ENCODE measurements at regions of chr5 and their contacts with region 1.

Region 1: GRCh38 chr5:141223112-141223783 is at the start of gene PCDHB14:
- DNase-seq: peak; percentile 79
- H3K4me3 Mint-ChIP-seq: peak within 1 kb of the TSS; percentile 84
- H3K27ac Mint-ChIP-seq: peak within 1 kb of the TSS; percentile 60
- H3K4me1 Mint-ChIP-seq: no peaks in the 10 kb centered on the region
- H3K27me3 Mint-ChIP-seq: no peaks in the 10 kb centered on the region
- CTCF ChIP-seq: peak; percentile 69
- total RNA-seq, gene PCDHB14: 4.7 and 6.2 TPM in 2 replicates

Region 2: GRCh38 chr5:139287890-139288635 is 1935.2 kb before region 1 on chr5:
- CTCF ChIA-PET with region 1: no interaction called
- POLR2A ChIA-PET with region 1: no interaction called
- intact Hi-C with region 1: no loop called
- DNase-seq: peak; percentile 47
- H3K4me3 Mint-ChIP-seq: no peak overlapping the region
- H3K27ac Mint-ChIP-seq: no peak overlapping the region
- H3K4me1 Mint-ChIP-seq: peaks cover 26% of the 10 kb centered on the region
- H3K27me3 Mint-ChIP-seq: no peaks in the 10 kb centered on the region
- CTCF ChIP-seq: peak; percentile 12

Region 3: DNA sequence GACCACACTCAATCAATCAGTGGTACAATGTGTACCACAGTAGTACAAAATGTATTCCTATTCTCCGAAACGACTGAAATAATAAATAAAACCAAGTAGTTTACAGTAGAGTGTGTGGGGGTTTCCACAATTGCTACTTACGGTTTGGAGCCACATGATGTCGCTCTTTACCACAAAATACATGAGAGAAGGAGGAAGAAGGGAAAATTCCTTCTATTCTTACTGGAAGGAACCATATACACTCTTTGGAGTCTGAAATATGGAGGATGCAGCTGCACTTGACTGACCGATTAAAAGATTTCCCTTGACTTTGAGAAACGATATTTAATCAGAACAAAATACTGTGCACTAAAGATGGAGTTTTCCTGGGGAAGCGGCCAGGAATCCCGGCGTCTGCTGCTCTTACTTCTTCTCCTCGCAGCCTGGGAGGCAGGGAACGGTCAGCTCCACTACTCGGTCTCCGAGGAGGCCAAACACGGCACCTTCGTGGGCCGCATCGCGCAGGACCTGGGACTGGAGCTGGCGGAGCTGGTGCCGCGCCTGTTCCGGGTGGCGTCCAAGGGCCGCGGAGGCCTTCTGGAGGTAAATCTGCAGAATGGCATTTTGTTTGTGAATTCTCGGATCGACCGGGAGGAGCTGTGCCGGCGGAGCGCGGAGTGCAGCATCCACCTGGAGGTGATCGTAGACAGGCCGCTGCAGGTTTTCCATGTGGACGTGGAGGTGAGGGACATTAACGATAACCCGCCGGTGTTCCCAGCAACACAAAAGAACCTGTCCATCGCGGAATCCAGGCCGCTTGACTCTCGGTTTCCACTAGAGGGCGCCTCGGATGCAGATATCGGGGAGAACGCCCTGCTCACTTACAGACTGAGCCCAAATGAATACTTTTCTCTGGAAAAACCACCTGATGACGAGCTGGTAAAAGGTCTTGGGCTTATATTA is 416.1 kb before region 1 on chr5 and contains the start of gene PCDHA4:
- CTCF ChIA-PET with region 1: interaction called, 17 read pairs
- POLR2A ChIA-PET with region 1: no interaction called
- intact Hi-C with region 1: no loop called
- DNase-seq: peak; percentile 18
- H3K4me3 Mint-ChIP-seq: peak within 1 kb of the TSS; percentile 55
- H3K27ac Mint-ChIP-seq: no peak within 1 kb of the TSS
- H3K4me1 Mint-ChIP-seq: no peaks in the 10 kb centered on the region
- H3K27me3 Mint-ChIP-seq: no peaks in the 10 kb centered on the region
- CTCF ChIP-seq: peak; percentile 38
- total RNA-seq, gene PCDHA4: 0.16 and 0.49 TPM in 2 replicates

Region 4: DNA sequence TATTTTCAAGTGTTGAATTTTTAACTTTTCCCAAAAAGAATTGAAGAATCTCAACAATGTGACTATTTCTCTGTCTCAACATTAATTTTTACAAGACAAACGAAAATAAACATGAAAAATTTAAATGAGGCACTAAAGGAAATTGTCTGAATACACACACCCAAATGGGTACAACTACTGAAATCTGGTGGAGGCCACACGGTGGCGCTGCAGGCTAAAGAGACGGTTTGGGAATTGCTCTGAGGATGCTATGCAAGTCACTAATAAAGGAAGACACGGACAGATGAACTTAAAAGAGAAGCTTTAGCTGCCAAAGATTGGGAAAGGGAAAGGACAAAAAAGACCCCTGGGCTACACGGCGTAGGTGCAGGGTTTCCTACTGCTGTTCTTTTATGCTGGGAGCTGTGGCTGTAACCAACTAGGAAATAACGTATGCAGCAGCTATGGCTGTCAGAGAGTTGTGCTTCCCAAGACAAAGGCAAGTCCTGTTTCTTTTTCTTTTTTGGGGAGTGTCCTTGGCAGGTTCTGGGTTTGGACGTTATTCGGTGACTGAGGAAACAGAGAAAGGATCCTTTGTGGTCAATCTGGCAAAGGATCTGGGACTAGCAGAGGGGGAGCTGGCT is 31.0 kb before region 1 on chr5 and contains the start of gene PCDHB10:
- CTCF ChIA-PET with region 1: interaction called, 12 read pairs
- POLR2A ChIA-PET with region 1: interaction called, 7 read pairs
- intact Hi-C with region 1: no loop called
- DNase-seq: peak; percentile 60
- H3K4me3 Mint-ChIP-seq: peak within 1 kb of the TSS; percentile 81
- H3K27ac Mint-ChIP-seq: no peak within 1 kb of the TSS
- H3K4me1 Mint-ChIP-seq: peaks cover 6% of the 10 kb centered on the region
- H3K27me3 Mint-ChIP-seq: no peaks in the 10 kb centered on the region
- CTCF ChIP-seq: peak; percentile 76
- total RNA-seq, gene PCDHB10: 1.2 and 1.4 TPM in 2 replicates

Region 5: DNA sequence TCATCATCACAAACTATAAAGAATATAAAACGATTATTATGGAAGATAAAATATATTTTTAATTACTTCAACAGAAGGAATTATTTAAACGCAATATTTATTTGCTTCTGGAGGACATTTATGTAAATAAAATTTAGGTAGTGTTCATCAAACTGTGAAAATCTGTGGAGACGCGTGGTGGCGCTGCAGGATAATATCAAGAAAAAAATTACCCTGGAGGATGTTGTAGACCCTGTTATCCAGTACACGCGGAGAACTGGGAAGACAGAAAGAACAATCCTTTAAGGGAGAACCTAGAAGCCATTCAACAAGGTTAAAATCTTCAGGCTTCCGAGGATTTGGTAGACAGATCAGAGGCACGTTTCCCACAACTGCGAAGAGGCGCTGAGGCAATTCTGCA is 14.8 kb before region 1 on chr5 and contains the start of gene PCDHB12:
- CTCF ChIA-PET with region 1: interaction called, 14 read pairs
- POLR2A ChIA-PET with region 1: interaction called, 7 read pairs
- intact Hi-C with region 1: no loop called
- DNase-seq: peak; percentile 60
- H3K4me3 Mint-ChIP-seq: peak within 1 kb of the TSS; percentile 72
- H3K27ac Mint-ChIP-seq: no peak within 1 kb of the TSS
- H3K4me1 Mint-ChIP-seq: no peaks in the 10 kb centered on the region
- H3K27me3 Mint-ChIP-seq: no peaks in the 10 kb centered on the region
- CTCF ChIP-seq: peak; percentile 38
- total RNA-seq, gene PCDHB12: 1.6 and 2.3 TPM in 2 replicates

Region 6: GRCh38 chr5:141320225-141321169 is 97.2 kb after region 1 on chr5 and contains the start of gene TAF7:
- CTCF ChIA-PET with region 1: interaction called, 49 read pairs
- POLR2A ChIA-PET with region 1: interaction called, 16 read pairs
- intact Hi-C with region 1: no loop called
- DNase-seq: peak; percentile 95
- H3K4me3 Mint-ChIP-seq: peak within 1 kb of the TSS; percentile 99
- H3K27ac Mint-ChIP-seq: peak within 1 kb of the TSS; percentile 100
- H3K4me1 Mint-ChIP-seq: peaks cover 14% of the 10 kb centered on the region
- H3K27me3 Mint-ChIP-seq: no peaks in the 10 kb centered on the region
- CTCF ChIP-seq: peak; percentile 90
- total RNA-seq, gene TAF7: 81.3 and 94.9 TPM in 2 replicates

Region 7: GRCh38 chr5:141412854-141413539 is 189.7 kb after region 1 on chr5 and contains the start of gene PCDHGA10:
- CTCF ChIA-PET with region 1: interaction called, 5 read pairs
- POLR2A ChIA-PET with region 1: no interaction called
- intact Hi-C with region 1: loop called (anchors 10 kb)
- DNase-seq: peak; percentile 83
- H3K4me3 Mint-ChIP-seq: peak within 1 kb of the TSS; percentile 54
- H3K27ac Mint-ChIP-seq: no peak within 1 kb of the TSS
- H3K4me1 Mint-ChIP-seq: no peaks in the 10 kb centered on the region
- H3K27me3 Mint-ChIP-seq: no peaks in the 10 kb centered on the region
- CTCF ChIP-seq: peak; percentile 67
- total RNA-seq, gene PCDHGA10: 1.4 TPM in 2 replicates

Region 8: GRCh38 chr5:141657937-141658545 is 434.8 kb after region 1 on chr5:
- CTCF ChIA-PET with region 1: no interaction called
- POLR2A ChIA-PET with region 1: no interaction called
- intact Hi-C with region 1: no loop called
- DNase-seq: peak; percentile 79
- H3K4me3 Mint-ChIP-seq: no peak overlapping the region
- H3K27ac Mint-ChIP-seq: no peak overlapping the region
- H3K4me1 Mint-ChIP-seq: peaks cover 7% of the 10 kb centered on the region
- H3K27me3 Mint-ChIP-seq: no peaks in the 10 kb centered on the region
- CTCF ChIP-seq: no peak

Measured in MCF 10A (cell line).